ENCODE measurements at regions of chr14 and their contacts with region 1.

Region 1: DNA sequence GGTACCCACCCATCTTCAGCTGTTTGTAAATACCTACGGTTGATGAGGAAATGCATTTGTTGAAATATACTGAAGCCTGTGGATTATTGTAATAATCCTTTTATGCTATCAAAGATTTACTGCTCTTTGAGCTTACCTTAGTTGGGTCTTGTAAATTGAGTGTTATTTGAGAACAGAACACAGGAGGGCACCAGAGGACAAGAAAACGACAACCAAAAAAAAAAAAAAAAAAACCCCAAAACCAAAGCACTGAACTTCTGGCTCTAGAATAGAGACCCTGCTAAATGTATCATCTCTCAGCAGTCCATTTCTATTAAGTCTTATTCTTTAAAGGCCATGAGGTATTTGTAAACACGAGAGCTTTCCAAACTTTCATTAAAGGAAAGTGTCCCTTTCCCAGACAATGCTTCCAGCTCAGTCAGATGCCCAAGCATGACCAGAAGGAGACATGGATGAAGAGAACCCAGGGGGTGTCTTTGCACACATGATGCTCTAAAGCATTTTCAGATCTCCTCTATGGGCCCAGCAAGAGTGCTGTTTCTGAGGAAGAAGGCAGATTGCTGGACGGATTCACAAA is 763.9 kb downstream of the NRXN3 start:
- DNase-seq: peak; percentile 29

Region 2: DNA sequence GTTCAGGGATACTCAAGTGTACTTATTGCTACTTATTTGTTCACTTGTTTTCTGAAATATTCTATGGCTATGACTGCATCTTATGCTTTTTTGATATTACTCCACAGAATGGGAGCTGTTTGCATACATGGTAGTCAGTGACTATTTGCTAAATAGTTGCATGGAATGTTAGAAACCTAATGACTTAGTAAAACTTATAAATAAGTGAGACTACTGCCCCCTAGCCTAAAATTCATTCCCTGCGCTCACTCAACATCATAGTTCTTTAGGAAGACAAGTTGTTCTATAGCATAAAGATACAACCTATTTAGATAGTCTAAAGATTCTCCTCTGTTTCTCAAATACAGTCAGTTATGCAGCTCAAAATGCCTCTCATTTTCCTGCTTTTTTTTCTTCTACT is 1702.0 kb after region 1 on chr14:
- CTCF ChIA-PET with region 1: interaction called, 10 read pairs
- POLR2A ChIA-PET with region 1: no interaction called
- DNase-seq: no peak